Esophagus muscularis mucosa (tissue), 4 donors: ENCODE measurements at regions of chr13 and their contacts with region 1.

Region 1: DNA sequence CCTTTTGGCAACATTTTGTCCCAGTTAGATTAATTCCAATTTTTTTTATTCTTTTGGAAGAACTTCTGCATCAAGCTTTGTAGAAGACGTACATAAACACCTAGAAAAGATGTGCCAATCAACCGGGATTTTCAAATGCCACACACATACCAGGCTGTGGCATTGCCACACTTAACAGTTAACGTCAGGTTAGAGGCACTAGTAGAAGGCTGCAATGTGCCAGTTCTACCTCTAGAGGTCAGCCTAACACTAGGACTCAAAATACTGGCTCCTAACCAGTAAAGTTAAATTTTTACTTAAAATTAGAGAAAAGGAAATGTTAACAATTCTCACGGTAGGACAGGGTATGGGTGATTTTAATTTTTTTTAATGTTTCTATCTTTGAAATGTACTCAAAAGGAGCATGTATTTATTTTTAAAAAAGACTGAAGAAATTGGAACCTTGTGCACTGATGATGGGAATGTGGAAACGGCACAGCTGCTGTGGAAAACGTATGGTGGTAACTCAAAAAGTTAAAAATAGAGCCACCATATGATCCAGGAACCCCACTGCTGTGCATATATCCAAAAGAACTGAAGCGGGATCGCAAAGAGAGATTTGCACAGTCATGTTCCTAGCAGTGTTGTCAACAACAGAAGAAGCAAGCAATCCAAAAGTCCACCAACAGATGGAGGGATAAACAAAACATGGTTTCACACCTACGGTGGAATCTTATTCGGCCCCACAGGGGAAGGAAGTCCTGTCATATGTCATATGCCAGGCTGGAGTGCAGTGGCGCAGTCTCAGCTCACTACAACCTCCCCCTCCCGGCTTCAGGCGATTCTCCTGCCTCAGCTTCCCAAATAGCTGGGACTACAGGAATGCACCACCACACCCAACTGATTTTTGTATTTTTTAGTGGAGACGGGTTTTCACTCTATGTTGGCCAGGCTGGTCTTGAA is 30.3 kb downstream of the CRYL1 start:
- DNase-seq: no peak
- H3K4me3 ChIP-seq: peak overlapping the region in 3 of 4 donors; percentile 4 to 18 (median 13)
- H3K27ac ChIP-seq: no peak overlapping the region
- H3K4me1 ChIP-seq: peaks cover 0 to 17% (median 14%) of the 10 kb centered on the region in 4 donors
- H3K27me3 ChIP-seq: no peaks in the 10 kb centered on the region
- CTCF ChIP-seq: peak; percentile 91 to 93 (median 92)
- EP300 ChIP-seq: no peak
- POLR2A ChIP-seq: no peak

Region 2: GRCh38 chr13:20924758-20925394 is 429.5 kb after region 1 on chr13:
- intact Hi-C with region 1: loop called (anchors 5 kb)
- DNase-seq: peak; percentile 93
- H3K4me3 ChIP-seq: no peak overlapping the region
- H3K27ac ChIP-seq: no peak overlapping the region
- H3K4me1 ChIP-seq: no peaks in the 10 kb centered on the region
- H3K27me3 ChIP-seq: no peaks in the 10 kb centered on the region
- CTCF ChIP-seq: peak; percentile 70 to 74 (median 72)
- EP300 ChIP-seq: no peak
- POLR2A ChIP-seq: no peak